Activated CD4-positive, alpha-beta T cell treated with anti-CD3 and anti-CD28 coated beads for 36 hours (primary cell): ENCODE measurements at regions of chr3 and their contacts with region 1.

Region 1: GRCh38 chr3:156509189-156510174 is 45.4 kb downstream of the SSR3 start:
- DNase-seq: no peak
- ATAC-seq: peak; percentile 58
- H3K4me3 Mint-ChIP-seq: no peak overlapping the region
- H3K27ac Mint-ChIP-seq: no peak overlapping the region
- H3K4me1 Mint-ChIP-seq: peaks cover 15% of the 10 kb centered on the region
- H3K27me3 Mint-ChIP-seq: peaks cover 13% of the 10 kb centered on the region

Region 2: DNA sequence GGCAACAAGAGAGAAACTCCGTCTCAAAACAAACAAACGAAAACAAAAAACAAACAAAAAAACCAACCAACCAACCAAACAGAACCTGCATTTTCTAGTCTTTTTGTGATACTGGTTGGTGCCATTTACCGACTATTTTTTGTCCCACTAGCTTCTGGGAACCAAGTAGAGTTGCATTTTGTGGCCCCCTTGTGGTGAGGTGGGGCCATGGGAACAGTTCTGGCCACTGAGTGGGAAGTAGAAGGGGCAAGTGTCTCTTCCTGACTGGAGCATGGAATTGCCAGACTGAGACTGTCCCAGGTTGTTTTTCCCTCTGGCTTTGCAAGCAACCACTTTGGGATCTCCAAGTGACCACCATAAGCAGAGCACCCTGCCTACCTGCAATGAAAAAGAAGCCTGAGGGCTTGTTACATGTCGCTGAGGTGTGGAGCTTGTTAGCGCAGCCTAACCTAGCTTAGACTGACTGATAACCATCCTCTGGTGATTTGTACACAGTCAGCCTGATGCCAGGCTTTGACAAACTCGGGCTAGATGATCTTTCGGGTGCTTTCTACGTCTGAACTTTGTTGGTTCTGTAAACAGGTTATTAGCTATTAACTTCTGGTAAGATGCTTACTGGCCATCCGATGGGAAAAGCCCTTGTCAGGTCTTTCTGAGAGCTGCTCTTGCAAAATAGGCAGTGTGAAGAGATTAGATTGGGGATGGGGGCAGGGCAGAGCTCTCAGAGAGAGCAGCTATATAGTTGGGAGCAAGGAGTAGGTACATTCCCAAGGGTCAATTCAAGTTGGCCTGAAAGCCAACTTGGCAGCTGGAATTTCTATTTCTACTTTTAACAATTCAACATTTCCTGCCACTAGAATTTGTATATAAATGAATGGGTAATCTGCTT is 126.8 kb before region 1 on chr3:
- CTCF ChIA-PET with region 1: interaction called, 8 read pairs
- POLR2A ChIA-PET with region 1: no interaction called
- intact Hi-C with region 1: loop called in 1 of 2 experiments (anchors 5 kb)
- DNase-seq: peak; percentile 43
- ATAC-seq: no peak
- H3K4me3 Mint-ChIP-seq: no peak overlapping the region
- H3K27ac Mint-ChIP-seq: no peak overlapping the region
- H3K4me1 Mint-ChIP-seq: no peaks in the 10 kb centered on the region
- H3K27me3 Mint-ChIP-seq: peaks cover 2% of the 10 kb centered on the region

Region 3: GRCh38 chr3:156474560-156475389 is 34.7 kb before region 1 on chr3:
- CTCF ChIA-PET with region 1: interaction called, 4 read pairs
- POLR2A ChIA-PET with region 1: no interaction called
- intact Hi-C with region 1: loop called in 1 of 2 experiments (anchors 5 kb)
- DNase-seq: peak; percentile 29
- ATAC-seq: no peak
- H3K4me3 Mint-ChIP-seq: no peak overlapping the region
- H3K27ac Mint-ChIP-seq: no peak overlapping the region
- H3K4me1 Mint-ChIP-seq: peaks cover 2% of the 10 kb centered on the region
- H3K27me3 Mint-ChIP-seq: peaks cover 9% of the 10 kb centered on the region

Region 4: DNA sequence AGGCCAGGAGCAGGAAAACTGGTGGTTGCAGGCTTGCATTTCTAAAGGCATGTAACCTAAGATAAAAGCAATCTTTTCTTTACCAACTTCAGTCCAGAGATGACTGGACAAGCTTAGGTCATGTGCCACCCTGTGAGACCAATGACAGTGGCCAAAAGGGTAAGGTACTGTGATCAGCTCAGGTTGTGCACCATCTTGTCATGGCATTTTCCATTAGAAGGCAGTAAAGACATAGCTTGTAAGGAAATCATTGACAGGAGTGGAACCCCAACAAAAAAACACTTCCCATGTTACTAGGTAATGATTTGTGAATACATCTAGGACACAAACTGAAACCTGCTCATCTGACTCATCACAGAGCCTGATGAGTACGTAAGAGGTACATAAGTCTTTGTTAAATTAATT is 10.3 kb after region 1 on chr3:
- CTCF ChIA-PET with region 1: interaction called, 34 read pairs
- POLR2A ChIA-PET with region 1: interaction called, 4 read pairs
- intact Hi-C with region 1: no loop called
- DNase-seq: peak; percentile 26
- ATAC-seq: peak; percentile 82
- H3K4me3 Mint-ChIP-seq: no peak overlapping the region
- H3K27ac Mint-ChIP-seq: peak overlapping the region; percentile 3
- H3K4me1 Mint-ChIP-seq: peaks cover 21% of the 10 kb centered on the region
- H3K27me3 Mint-ChIP-seq: peaks cover 26% of the 10 kb centered on the region